ENCODE measurements at regions of chr20 and their contacts with region 1.

Region 1: DNA sequence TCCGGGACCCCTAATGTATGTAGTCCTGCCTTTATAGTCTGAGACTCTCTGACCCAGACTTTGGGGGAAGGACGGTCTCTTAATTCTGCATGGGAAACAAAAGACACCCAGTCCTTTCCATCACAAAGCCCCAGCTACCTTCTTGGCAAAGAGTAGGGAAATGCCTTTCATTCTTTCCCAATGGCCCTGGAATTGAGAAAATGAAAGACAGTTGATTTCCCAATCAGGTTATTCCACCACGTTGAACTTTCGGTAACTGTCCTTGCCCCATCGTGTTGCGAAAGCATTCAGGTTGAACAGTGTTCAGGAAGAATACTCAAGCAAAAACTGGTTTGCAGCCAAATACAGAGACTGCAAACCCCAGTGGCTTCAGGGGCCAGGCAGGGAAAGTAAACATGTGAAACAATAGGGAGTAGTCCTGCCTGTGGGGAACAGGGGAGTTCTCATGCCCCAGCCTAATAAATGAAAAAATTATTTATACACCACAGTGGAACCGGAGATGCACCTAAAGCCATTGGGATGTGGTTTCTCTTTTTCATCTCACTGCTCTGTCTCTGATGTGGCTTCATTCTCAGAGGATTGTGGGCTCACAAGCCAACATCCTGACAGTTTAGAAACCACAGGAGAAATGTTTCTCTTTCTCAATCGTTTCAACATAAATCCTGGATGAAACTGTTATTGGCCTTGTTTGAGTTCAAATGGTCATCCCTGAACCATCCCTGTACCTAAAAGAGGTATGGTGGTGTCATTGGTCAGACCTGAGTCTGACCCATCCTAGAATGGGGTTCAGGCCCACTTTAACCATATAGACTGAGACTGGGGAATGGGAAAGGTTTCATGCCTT is 44.2 kb upstream of the SLC9A8 start:
- DNase-seq: peak; percentile 70
- ATAC-seq: peak; percentile 66
- H3K4me3 ChIP-seq: no peak overlapping the region
- H3K27ac ChIP-seq: peak overlapping the region; percentile 79; the same call in 1 of the 2 replicates
- H3K4me1 ChIP-seq: peaks cover 9% of the 10 kb centered on the region
- H3K27me3 ChIP-seq: no peaks in the 10 kb centered on the region
- CTCF ChIP-seq: no peak
- POLR2A ChIP-seq: no peak
- RAD21 ChIP-seq: no peak

Region 2: DNA sequence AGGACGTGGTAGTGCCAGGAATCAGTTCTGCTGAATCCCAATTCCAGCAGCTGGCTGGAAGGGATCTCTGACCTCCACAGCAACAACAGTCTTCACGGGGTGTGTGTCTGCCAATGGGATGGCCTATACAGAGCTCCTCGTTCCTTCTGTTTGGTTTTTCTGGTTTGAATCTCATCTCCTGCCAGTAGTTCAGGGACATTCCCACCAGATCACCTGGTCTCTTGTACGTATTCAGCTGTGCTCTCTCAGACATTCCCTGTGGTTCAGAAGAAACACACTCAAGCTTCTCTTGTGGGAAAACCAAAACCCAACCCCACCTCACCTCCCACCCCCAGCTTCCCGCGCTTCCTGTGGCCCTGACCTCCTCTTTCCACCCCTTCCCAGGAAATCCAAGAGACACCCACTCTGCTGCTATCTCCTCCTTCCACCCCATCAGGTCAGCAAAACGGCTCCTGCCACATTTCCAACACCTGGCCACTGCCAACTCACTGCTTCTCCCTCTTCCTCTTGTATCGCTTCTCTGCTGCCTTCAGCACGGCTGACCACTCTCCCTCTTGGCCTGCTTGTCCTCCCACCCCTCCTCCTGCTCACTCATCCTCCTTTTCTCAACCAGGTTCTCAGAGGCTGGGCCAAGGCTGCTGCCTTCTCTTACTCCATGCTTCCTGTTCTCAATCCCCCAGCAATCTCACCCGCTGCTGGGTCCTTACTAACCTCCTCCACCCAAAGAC is 137.2 kb before region 1 on chr20:
- CTCF ChIA-PET with region 1: no interaction called
- POLR2A ChIA-PET with region 1: no interaction called
- dilution Hi-C with region 1: no loop called
- in situ Hi-C with region 1: no loop called
- intact Hi-C with region 1: no loop called
- DNase-seq: peak; percentile 44
- ATAC-seq: peak; percentile 37; the same call in 1 of the 2 replicates
- H3K4me3 ChIP-seq: no peak overlapping the region
- H3K27ac ChIP-seq: no peak overlapping the region
- H3K4me1 ChIP-seq: no peaks in the 10 kb centered on the region
- H3K27me3 ChIP-seq: peaks cover 8% of the 10 kb centered on the region
- CTCF ChIP-seq: no peak
- POLR2A ChIP-seq: no peak
- RAD21 ChIP-seq: no peak

Region 3: GRCh38 chr20:49747707-49748524 is 20.5 kb before region 1 on chr20:
- CTCF ChIA-PET with region 1: no interaction called
- POLR2A ChIA-PET with region 1: interaction called, 20 read pairs
- dilution Hi-C with region 1: no loop called
- in situ Hi-C with region 1: no loop called
- intact Hi-C with region 1: no loop called
- DNase-seq: peak; percentile 50
- ATAC-seq: peak; percentile 86
- H3K4me3 ChIP-seq: no peak overlapping the region
- H3K27ac ChIP-seq: peak overlapping the region; percentile 46; the same call in 1 of the 2 replicates
- H3K4me1 ChIP-seq: peaks cover 5% of the 10 kb centered on the region; the same call in 1 of the 2 replicates
- H3K27me3 ChIP-seq: peaks cover 5% of the 10 kb centered on the region
- CTCF ChIP-seq: no peak
- POLR2A ChIP-seq: no peak
- RAD21 ChIP-seq: no peak

Region 4: GRCh38 chr20:49812463-49813304 is 44.3 kb after region 1 on chr20 and contains the start of gene SLC9A8:
- CTCF ChIA-PET with region 1: no interaction called
- POLR2A ChIA-PET with region 1: no interaction called
- dilution Hi-C with region 1: no loop called
- in situ Hi-C with region 1: no loop called
- intact Hi-C with region 1: loop called (anchors 2 kb)
- DNase-seq: peak; percentile 85
- ATAC-seq: peak; percentile 97
- H3K4me3 ChIP-seq: peak within 1 kb of the TSS; percentile 86
- H3K27ac ChIP-seq: peak within 1 kb of the TSS; percentile 77
- H3K4me1 ChIP-seq: peaks cover 7% of the 10 kb centered on the region
- H3K27me3 ChIP-seq: no peaks in the 10 kb centered on the region
- CTCF ChIP-seq: peak; percentile 42
- POLR2A ChIP-seq: peak; percentile 83
- RAD21 ChIP-seq: no peak
- total RNA-seq, gene SLC9A8: 3.6 and 5.0 TPM in 2 replicates